Left ventricle myocardium inferior (tissue), 1 donor: ENCODE measurements at regions of chr9 and their contacts with region 1.

Region 1: GRCh38 chr9:114677418-114677817 is 4.6 kb downstream of the TEX48 start:
- DNase-seq: no peak
- H3K4me3 ChIP-seq: no peak overlapping the region
- H3K27ac ChIP-seq: no peak overlapping the region
- H3K4me1 ChIP-seq: no peaks in the 10 kb centered on the region
- H3K27me3 ChIP-seq: peaks cover 75% of the 10 kb centered on the region
- CTCF ChIP-seq: no peak

Region 2: GRCh38 chr9:113609562-113610318 is 1067.7 kb before region 1 on chr9:
- intact Hi-C with region 1: no loop called
- DNase-seq: peak; percentile 87
- H3K4me3 ChIP-seq: peak overlapping the region; percentile 28
- H3K27ac ChIP-seq: peak overlapping the region; percentile 91
- H3K4me1 ChIP-seq: peaks cover 57% of the 10 kb centered on the region
- H3K27me3 ChIP-seq: no peaks in the 10 kb centered on the region
- CTCF ChIP-seq: no peak

Region 3: GRCh38 chr9:114616653-114617520 is 60.5 kb before region 1 on chr9:
- intact Hi-C with region 1: no loop called
- DNase-seq: peak; percentile 67
- H3K4me3 ChIP-seq: no peak overlapping the region
- H3K27ac ChIP-seq: peak overlapping the region; percentile 5
- H3K4me1 ChIP-seq: peaks cover 9% of the 10 kb centered on the region
- H3K27me3 ChIP-seq: no peaks in the 10 kb centered on the region
- CTCF ChIP-seq: no peak

Region 4: GRCh38 chr9:114906908-114907571 is 229.6 kb after region 1 on chr9:
- intact Hi-C with region 1: loop called (anchors 10 kb)
- DNase-seq: no peak
- H3K4me3 ChIP-seq: no peak overlapping the region
- H3K27ac ChIP-seq: no peak overlapping the region
- H3K4me1 ChIP-seq: no peaks in the 10 kb centered on the region
- H3K27me3 ChIP-seq: peaks cover 56% of the 10 kb centered on the region
- CTCF ChIP-seq: peak; percentile 41